Dorsolateral prefrontal cortex (tissue), 120 donors: ENCODE measurements at regions of chr1 and their contacts with region 1.

Region 1: GRCh38 chr1:19240673-19241538 is 10.4 kb downstream of the EMC1 start:
- DNase-seq: peak in 9 of 10 donors; percentile 32 to 73 (median 60)
- H3K4me3 ChIP-seq: no peak overlapping the region
- H3K27ac ChIP-seq: peak overlapping the region in 52 of 59 donors; percentile 1 to 82 (median 56)
- H3K27me3 ChIP-seq: no peaks in the 10 kb centered on the region
- CTCF ChIP-seq: peak; percentile 72 to 99 (median 94)

Region 2: DNA sequence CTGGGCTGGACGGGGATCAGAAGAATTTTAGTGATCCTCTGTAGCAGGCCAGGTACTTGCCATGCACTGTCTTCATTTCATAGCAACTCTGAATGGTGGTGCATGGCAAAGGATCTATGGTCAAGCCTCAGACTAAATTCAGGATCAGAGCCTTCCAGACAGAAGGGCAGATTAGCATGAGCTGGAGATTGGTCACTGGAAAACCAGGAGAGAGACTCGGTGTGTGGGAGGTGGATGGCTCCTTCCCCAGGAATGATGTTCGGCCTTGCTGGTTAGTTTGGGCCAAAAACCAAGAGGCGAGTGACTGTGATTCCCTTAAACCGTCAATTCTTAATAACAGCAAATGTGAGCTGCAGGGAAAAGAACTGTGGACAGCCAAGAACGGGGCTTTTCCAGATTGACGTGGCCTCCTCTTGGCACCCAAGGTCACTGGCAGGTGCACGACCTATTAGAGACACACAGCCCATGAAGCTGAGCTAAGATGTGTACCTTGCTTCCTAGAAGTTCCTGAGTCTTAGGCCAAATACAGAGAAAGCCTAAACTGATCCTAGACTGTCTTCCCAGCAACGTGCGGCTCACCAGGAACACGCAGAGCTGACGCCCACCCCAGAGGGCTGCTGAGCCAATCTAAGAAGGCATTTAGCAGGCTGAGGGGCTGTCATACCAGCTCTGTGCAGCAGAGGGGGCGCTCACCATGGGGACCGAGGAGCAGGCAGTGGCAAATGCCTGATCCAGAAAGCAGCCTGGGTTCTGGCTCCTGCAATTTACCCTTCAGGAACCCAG is 357.1 kb before region 1 on chr1:
- intact Hi-C with region 1: loop called in 1 of 2 experiments (anchors 5 kb)
- DNase-seq: peak; percentile 74 to 89 (median 84)
- H3K4me3 ChIP-seq: no peak overlapping the region
- H3K27ac ChIP-seq: peak overlapping the region in 14 of 59 donors; percentile 1 to 54 (median 22)
- H3K27me3 ChIP-seq: no peaks in the 10 kb centered on the region
- CTCF ChIP-seq: peak; percentile 78 to 96 (median 91)

Region 3: GRCh38 chr1:19087737-19088594 is 152.9 kb before region 1 on chr1:
- intact Hi-C with region 1: no loop called
- DNase-seq: no peak
- H3K4me3 ChIP-seq: no peak overlapping the region
- H3K27ac ChIP-seq: peak overlapping the region in 2 of 59 donors; percentile 44
- H3K27me3 ChIP-seq: no peaks in the 10 kb centered on the region
- CTCF ChIP-seq: no peak